Endothelial cell of umbilical vein (primary cell): ENCODE measurements at regions of chr15 and their contacts with region 1.

Region 1: GRCh38 chr15:32936283-32936918 is 218.6 kb downstream of the GREM1 start:
- DNase-seq: peak; percentile 62
- H3K4me3 ChIP-seq: no peak overlapping the region
- H3K27ac ChIP-seq: no peak overlapping the region
- H3K4me1 ChIP-seq: no peaks in the 10 kb centered on the region
- H3K27me3 ChIP-seq: peaks cover 2 to 8% of the 10 kb centered on the region in 2 experiments
- CTCF ChIP-seq: peak; percentile 54 to 66
- POLR2A ChIP-seq: no peak

Region 2: DNA sequence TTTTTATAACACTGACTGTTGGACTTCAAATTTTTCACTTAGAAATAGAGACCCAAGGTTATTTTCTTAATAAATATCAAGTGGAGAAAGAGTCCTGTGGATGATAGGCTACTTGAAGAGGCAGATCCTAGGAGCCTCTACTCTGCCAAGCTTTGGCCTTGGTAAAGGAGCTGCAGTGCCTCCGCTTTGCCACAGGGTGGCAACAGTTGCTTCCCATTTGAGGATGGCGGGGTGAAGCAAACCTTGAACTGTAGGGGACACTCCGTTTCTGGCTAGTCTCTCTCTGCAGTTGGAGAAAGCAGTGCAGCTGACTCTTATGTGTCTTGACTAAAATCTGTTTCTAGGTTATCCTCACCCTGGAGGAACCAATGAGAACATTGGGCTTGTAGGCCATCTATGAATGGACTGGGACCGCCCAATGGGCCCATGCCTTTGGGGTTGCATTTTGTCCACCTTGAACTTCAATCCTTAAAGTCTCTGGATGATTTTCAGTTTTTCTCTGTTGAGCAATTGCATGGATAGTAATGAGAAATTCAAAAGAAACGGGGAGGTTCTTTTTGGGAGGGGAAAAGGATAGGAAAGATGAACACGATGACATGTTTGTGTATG is 285.1 kb before region 1 on chr15:
- CTCF ChIA-PET with region 1: interaction called, 30 read pairs
- POLR2A ChIA-PET with region 1: no interaction called
- dilution Hi-C with region 1: no loop called
- intact Hi-C with region 1: no loop called
- DNase-seq: peak; percentile 54
- H3K4me3 ChIP-seq: no peak overlapping the region
- H3K27ac ChIP-seq: no peak overlapping the region
- H3K4me1 ChIP-seq: peaks cover 8% of the 10 kb centered on the region
- H3K27me3 ChIP-seq: no peaks in the 10 kb centered on the region
- CTCF ChIP-seq: peak; percentile 88 to 93
- POLR2A ChIP-seq: no peak

Region 3: DNA sequence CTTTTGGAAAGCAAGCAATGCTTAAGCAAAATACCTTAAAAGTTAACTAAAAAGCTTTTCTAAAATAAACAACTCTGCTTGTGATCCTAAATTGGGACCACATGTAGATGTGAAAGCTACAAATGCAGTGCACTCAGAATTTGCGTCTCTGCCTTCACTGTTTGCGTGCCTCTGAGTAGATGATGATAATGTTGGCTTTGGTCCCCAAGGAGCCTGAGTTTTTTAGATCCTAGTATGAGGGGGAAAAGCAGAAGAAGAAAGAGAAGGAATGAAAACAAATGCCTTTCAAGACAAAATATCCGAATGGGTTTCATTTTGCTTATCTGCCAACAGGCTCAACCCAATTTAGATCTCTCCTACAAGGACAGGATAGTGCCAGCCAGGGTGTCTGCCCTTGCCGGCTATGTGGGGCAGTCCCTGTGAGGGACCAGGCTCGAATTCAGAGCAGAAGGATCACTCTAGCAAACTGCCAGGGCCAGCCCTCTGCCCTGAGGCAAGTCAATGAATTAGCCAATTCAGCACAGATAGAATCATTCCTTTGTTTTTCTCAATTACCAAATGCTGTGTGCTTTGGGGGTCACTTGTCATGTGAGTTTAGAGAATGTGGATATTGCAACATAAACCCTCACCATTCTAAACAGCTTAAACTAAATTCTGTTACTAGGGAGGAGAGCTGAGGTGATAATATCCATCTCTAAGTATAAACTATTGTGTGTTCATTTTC is 266.3 kb before region 1 on chr15:
- CTCF ChIA-PET with region 1: interaction called, 19 read pairs
- POLR2A ChIA-PET with region 1: no interaction called
- dilution Hi-C with region 1: no loop called
- intact Hi-C with region 1: no loop called
- DNase-seq: no peak
- H3K4me3 ChIP-seq: no peak overlapping the region
- H3K27ac ChIP-seq: no peak overlapping the region
- H3K4me1 ChIP-seq: no peaks in the 10 kb centered on the region
- H3K27me3 ChIP-seq: no peaks in the 10 kb centered on the region
- CTCF ChIP-seq: no peak
- POLR2A ChIP-seq: no peak

Region 4: DNA sequence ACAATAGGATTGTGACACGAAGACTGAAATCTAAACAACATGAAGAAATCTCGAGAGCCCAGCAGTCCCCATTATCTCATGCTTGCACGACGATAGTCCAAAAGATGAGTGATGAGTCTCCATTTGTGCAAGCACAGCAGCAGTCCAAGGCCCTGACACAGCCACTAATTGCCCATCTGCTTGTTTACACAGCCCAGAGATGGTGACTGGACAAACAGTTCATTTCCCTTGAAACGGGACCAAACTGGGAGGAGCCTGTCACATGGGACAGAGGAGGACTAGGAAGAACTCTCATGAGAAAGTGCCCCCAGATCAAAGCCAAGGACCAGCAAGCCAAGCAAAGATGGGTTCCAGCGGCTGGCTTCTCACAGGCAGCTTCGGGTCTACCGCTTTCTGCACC is 97.6 kb before region 1 on chr15:
- CTCF ChIA-PET with region 1: interaction called, 293 read pairs
- POLR2A ChIA-PET with region 1: interaction called, 3 read pairs
- dilution Hi-C with region 1: no loop called
- intact Hi-C with region 1: loop called (anchors 1 kb)
- DNase-seq: peak; percentile 57
- H3K4me3 ChIP-seq: no peak overlapping the region
- H3K27ac ChIP-seq: no peak overlapping the region
- H3K4me1 ChIP-seq: peaks cover 14% of the 10 kb centered on the region
- H3K27me3 ChIP-seq: no peaks in the 10 kb centered on the region
- CTCF ChIP-seq: no peak
- POLR2A ChIP-seq: no peak

Region 5: GRCh38 chr15:32855942-32856341 is 80.5 kb before region 1 on chr15:
- CTCF ChIA-PET with region 1: interaction called, 14 read pairs
- POLR2A ChIA-PET with region 1: no interaction called
- dilution Hi-C with region 1: no loop called
- intact Hi-C with region 1: no loop called
- DNase-seq: peak; percentile 94
- H3K4me3 ChIP-seq: no peak overlapping the region
- H3K27ac ChIP-seq: peak overlapping the region; percentile 85
- H3K4me1 ChIP-seq: peaks cover 34% of the 10 kb centered on the region
- H3K27me3 ChIP-seq: no peaks in the 10 kb centered on the region
- CTCF ChIP-seq: no peak
- POLR2A ChIP-seq: peak; percentile 28

Region 6: DNA sequence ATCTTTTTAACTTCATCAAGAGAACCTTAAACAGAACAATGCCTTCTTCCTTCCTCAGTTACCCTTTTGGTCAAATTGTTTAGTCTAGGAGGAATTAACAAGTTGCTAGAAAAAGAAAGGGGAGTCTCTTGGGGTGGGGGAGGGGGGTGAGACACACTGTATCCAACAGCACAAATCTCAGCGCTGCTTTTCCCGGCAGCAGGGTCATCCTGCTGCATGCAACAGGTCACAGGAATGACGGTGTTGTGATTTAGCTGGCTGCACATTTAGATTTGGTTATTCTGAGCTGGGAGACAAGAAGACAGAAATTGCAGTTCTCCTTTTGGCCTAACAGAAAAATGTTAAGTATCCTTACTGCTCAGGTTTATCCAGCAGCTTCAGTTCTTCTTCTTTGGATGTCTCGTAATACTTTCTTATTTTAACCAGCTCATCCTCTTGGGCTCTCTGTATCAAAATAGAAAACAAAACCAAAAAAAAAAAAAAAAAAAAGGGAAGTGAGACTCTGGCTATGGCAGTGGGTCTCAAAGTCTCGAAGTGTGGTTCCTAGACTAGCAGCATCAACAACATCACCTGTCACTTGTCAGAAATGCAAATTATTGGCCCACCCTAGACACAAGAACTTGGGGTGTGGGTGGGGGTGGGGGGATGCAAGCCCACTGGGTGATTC is 28.1 kb before region 1 on chr15:
- CTCF ChIA-PET with region 1: interaction called, 17 read pairs
- POLR2A ChIA-PET with region 1: no interaction called
- dilution Hi-C with region 1: no loop called
- intact Hi-C with region 1: no loop called
- DNase-seq: peak; percentile 60
- H3K4me3 ChIP-seq: no peak overlapping the region
- H3K27ac ChIP-seq: no peak overlapping the region
- H3K4me1 ChIP-seq: no peaks in the 10 kb centered on the region
- H3K27me3 ChIP-seq: peaks cover 0 to 4% of the 10 kb centered on the region in 2 experiments
- CTCF ChIP-seq: no peak
- POLR2A ChIP-seq: no peak

Region 7: GRCh38 chr15:32994810-32995424 is 58.5 kb after region 1 on chr15:
- CTCF ChIA-PET with region 1: interaction called, 15 read pairs
- POLR2A ChIA-PET with region 1: no interaction called
- dilution Hi-C with region 1: no loop called
- intact Hi-C with region 1: no loop called
- DNase-seq: peak; percentile 63
- H3K4me3 ChIP-seq: no peak overlapping the region
- H3K27ac ChIP-seq: no peak overlapping the region
- H3K4me1 ChIP-seq: no peaks in the 10 kb centered on the region
- H3K27me3 ChIP-seq: no peaks in the 10 kb centered on the region
- CTCF ChIP-seq: peak; percentile 19 to 25
- POLR2A ChIP-seq: no peak